Sigmoid colon (tissue), 7 donors: ENCODE measurements at regions of chr3 and their contacts with region 1.

Region 1: GRCh38 chr3:107522510-107523288 is at the start of gene BBX:
- DNase-seq: peak; percentile 96
- H3K4me3 ChIP-seq: peak within 1 kb of the TSS; percentile 62 to 98 (median 92)
- H3K27ac ChIP-seq: peak within 1 kb of the TSS; percentile 85 to 98 (median 94)
- H3K4me1 ChIP-seq: peaks cover 0 to 19% (median 9%) of the 10 kb centered on the region in 4 donors
- H3K27me3 ChIP-seq: no peaks in the 10 kb centered on the region
- CTCF ChIP-seq: no peak
- EP300 ChIP-seq: no peak
- POLR2A ChIP-seq: peak; percentile 71 to 72
- total RNA-seq, gene BBX: 71.1 to 93.3 (median 82.8) TPM

Region 2: GRCh38 chr3:105868742-105869530 is 1653.8 kb before region 1 on chr3 and contains the start of gene CBLB:
- intact Hi-C with region 1: loop called (anchors 10 kb)
- DNase-seq: peak; percentile 97
- H3K4me3 ChIP-seq: peak within 1 kb of the TSS; percentile 76 to 97 (median 97)
- H3K27ac ChIP-seq: peak within 1 kb of the TSS; percentile 94 to 99 (median 98)
- H3K4me1 ChIP-seq: peaks cover 0 to 48% (median 33%) of the 10 kb centered on the region in 4 donors
- H3K27me3 ChIP-seq: no peaks in the 10 kb centered on the region
- CTCF ChIP-seq: no peak
- EP300 ChIP-seq: no peak
- POLR2A ChIP-seq: peak; percentile 74 to 81
- total RNA-seq, gene CBLB: 27.4 to 55.9 (median 48.3) TPM

Region 3: DNA sequence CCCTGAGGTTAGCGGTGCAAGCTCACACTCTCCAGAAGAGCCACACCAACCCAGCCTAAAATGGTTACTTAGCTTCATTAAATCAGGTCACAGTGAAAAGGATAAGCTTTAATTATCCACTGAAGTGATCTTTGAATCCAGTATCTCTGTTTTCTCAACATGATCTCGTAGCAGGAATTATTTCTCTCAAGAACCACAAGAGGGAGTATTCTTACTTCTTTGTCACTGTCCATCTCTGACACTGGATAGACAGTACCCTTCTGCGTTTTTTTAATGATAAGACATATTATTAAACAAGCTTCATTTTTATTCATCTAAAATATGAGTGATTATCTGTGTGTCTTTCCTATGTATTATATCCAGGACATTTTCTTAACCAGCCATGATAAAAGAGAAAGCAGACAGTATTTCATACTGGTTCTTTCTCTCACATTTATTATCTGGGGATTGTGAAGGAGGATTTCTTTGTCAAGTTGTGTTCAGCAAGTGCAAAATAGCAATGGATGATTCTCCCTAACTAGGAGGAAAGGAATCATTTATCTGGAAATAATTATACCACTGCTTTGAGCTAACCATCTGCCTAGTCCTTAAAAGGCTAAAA is 250.8 kb before region 1 on chr3:
- intact Hi-C with region 1: loop called (anchors 10 kb)
- DNase-seq: no peak
- H3K4me3 ChIP-seq: no peak overlapping the region
- H3K27ac ChIP-seq: no peak overlapping the region
- H3K4me1 ChIP-seq: no peaks in the 10 kb centered on the region
- H3K27me3 ChIP-seq: no peaks in the 10 kb centered on the region
- CTCF ChIP-seq: peak; percentile 35 to 67 (median 57)
- EP300 ChIP-seq: no peak
- POLR2A ChIP-seq: no peak

Region 4: GRCh38 chr3:107574650-107575049 is 52.0 kb after region 1 on chr3:
- intact Hi-C with region 1: no loop called
- DNase-seq: no peak
- H3K4me3 ChIP-seq: no peak overlapping the region
- H3K27ac ChIP-seq: no peak overlapping the region
- H3K4me1 ChIP-seq: no peaks in the 10 kb centered on the region
- H3K27me3 ChIP-seq: no peaks in the 10 kb centered on the region
- CTCF ChIP-seq: peak in 2 of 4 experiments; percentile 22 to 42
- EP300 ChIP-seq: no peak
- POLR2A ChIP-seq: no peak

Region 5: GRCh38 chr3:107660306-107660976 is 137.7 kb after region 1 on chr3:
- intact Hi-C with region 1: loop called (anchors 5 kb)
- DNase-seq: no peak
- H3K4me3 ChIP-seq: no peak overlapping the region
- H3K27ac ChIP-seq: no peak overlapping the region
- H3K4me1 ChIP-seq: peaks cover 0 to 42% (median 18%) of the 10 kb centered on the region in 4 donors
- H3K27me3 ChIP-seq: no peaks in the 10 kb centered on the region
- CTCF ChIP-seq: peak; percentile 25 to 50 (median 38)
- EP300 ChIP-seq: no peak
- POLR2A ChIP-seq: no peak

Region 6: GRCh38 chr3:108221911-108222852 is 699.5 kb after region 1 on chr3 and contains the start of gene IFT57:
- intact Hi-C with region 1: loop called (anchors 5 kb)
- DNase-seq: peak; percentile 99
- H3K4me3 ChIP-seq: peak within 1 kb of the TSS; percentile 78 to 86 (median 82)
- H3K27ac ChIP-seq: peak within 1 kb of the TSS; percentile 80 to 84 (median 82)
- H3K4me1 ChIP-seq: peaks cover 0 to 33% (median 19%) of the 10 kb centered on the region in 4 donors
- H3K27me3 ChIP-seq: no peaks in the 10 kb centered on the region
- CTCF ChIP-seq: no peak
- EP300 ChIP-seq: no peak
- POLR2A ChIP-seq: peak; percentile 26 to 57
- total RNA-seq, gene IFT57: 38.8 to 49.6 (median 44.0) TPM